Activated CD4-positive, alpha-beta T cell treated with anti-CD3 and anti-CD28 coated beads for 36 hours (primary cell): ENCODE measurements at regions of chr16 and their contacts with region 1.

Region 1: DNA sequence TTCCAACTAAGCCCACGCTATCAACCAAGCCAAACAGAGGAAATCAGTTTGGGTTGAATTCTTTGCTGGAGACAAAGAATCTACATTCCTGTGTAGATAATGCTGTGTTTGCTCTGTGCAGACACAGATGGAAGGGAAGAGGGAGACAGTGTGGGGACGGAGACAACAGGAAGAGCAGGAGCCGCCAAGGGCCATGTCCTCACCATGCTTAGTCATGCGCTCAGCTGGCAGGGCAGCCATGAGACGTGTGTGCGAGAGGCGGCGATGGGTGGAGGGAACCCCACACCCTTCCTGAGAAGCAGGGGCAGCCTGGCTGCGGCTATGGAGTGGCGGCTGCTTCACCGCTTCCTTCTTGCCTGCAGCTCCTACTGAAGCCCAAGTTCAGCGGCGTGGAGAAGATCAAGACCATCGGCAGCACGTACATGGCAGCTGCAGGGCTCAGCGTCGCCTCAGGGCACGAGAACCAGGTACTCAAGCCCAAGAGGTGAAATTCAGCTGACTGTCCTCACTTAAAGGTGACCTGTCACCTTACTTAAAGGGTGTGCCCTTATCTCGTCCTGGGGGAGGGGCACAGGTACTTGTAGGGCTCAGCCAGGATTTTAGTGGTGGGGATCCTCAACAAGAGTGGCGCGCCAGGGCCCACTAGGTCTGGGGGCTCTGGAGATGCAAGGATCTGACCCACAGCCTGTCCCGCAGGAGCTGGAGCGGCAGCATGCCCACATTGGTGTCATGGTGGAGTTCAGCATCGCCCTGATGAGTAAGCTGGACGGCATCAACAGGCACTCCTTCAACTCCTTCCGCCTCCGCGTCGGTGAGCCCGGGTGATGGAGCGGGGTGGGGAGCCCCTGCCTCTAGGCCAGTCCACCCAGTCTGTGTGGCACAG is 47.5 kb downstream of the ADCY7 start:
- DNase-seq: peak; percentile 67
- ATAC-seq: peak; percentile 75
- H3K4me3 Mint-ChIP-seq: no peak overlapping the region
- H3K27ac Mint-ChIP-seq: peak overlapping the region; percentile 88
- H3K4me1 Mint-ChIP-seq: peaks cover 29% of the 10 kb centered on the region
- H3K27me3 Mint-ChIP-seq: no peaks in the 10 kb centered on the region

Region 2: GRCh38 chr16:50281964-50282538 is 31.8 kb before region 1 on chr16:
- CTCF ChIA-PET with region 1: interaction called, 3 read pairs
- POLR2A ChIA-PET with region 1: no interaction called
- intact Hi-C with region 1: loop called in 1 of 2 experiments (anchors 5 kb)
- DNase-seq: peak; percentile 67
- ATAC-seq: peak; percentile 21
- H3K4me3 Mint-ChIP-seq: peak overlapping the region; percentile 43
- H3K27ac Mint-ChIP-seq: peak overlapping the region; percentile 55
- H3K4me1 Mint-ChIP-seq: peaks cover 92% of the 10 kb centered on the region
- H3K27me3 Mint-ChIP-seq: no peaks in the 10 kb centered on the region